Naive thymus-derived CD4-positive, alpha-beta T cell (primary cell): ENCODE measurements at regions of chr7 and their contacts with region 1.

Region 1: DNA sequence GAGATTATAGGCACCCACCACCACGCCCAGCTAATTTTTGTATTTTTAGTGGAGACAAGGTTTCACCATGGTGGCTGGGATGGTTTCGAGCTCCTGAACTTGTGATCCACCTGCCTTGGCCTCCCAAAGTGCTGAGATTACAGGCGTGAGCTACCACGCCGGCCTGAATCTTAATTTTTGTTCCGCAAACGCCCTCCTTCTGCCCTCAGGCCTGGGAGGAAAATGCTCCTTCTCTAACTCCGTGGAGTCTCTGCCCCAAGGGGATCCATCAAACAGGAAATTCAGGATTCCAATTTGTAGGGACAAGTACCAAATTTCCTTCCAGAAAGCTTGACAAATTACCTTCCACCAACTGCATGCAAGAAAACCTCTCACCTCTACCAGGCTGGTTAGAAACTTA is 43.2 kb downstream of the RBAK start:
- DNase-seq: no peak
- ATAC-seq: no peak
- H3K4me3 ChIP-seq: no peak overlapping the region
- H3K4me3 Mint-ChIP-seq: no peak overlapping the region
- H3K27ac ChIP-seq: no peak overlapping the region
- H3K27ac Mint-ChIP-seq: no peak overlapping the region
- H3K4me1 ChIP-seq: no peaks in the 10 kb centered on the region
- H3K4me1 Mint-ChIP-seq: peaks cover 0 to 11% (median 4%) of the 10 kb centered on the region in 7 donors
- H3K27me3 ChIP-seq: no peaks in the 10 kb centered on the region
- H3K27me3 Mint-ChIP-seq: peaks cover 0 to 9% (median 0%) of the 10 kb centered on the region in 5 donors

Region 2: GRCh38 chr7:4797858-4798705 is 290.8 kb before region 1 on chr7:
- CTCF ChIA-PET with region 1: interaction called, 12 read pairs
- POLR2A ChIA-PET with region 1: no interaction called
- intact Hi-C with region 1: loop called (anchors 1 to 2 kb)
- DNase-seq: peak; percentile 34 to 77 (median 60)
- ATAC-seq: peak; percentile 91
- H3K4me3 ChIP-seq: no peak overlapping the region
- H3K4me3 Mint-ChIP-seq: no peak overlapping the region
- H3K27ac ChIP-seq: no peak overlapping the region
- H3K27ac Mint-ChIP-seq: no peak overlapping the region
- H3K4me1 ChIP-seq: no peaks in the 10 kb centered on the region
- H3K4me1 Mint-ChIP-seq: peaks cover 0 to 10% (median 6%) of the 10 kb centered on the region in 7 donors
- H3K27me3 ChIP-seq: no peaks in the 10 kb centered on the region
- H3K27me3 Mint-ChIP-seq: no peaks in the 10 kb centered on the region

Region 3: GRCh38 chr7:4830176-4830575 is 258.7 kb before region 1 on chr7:
- CTCF ChIA-PET with region 1: interaction called, 25 read pairs
- POLR2A ChIA-PET with region 1: no interaction called
- intact Hi-C with region 1: loop called in 1 of 2 experiments (anchors 1 kb)
- DNase-seq: peak; percentile 23 to 69 (median 49)
- ATAC-seq: peak; percentile 79
- H3K4me3 ChIP-seq: no peak overlapping the region
- H3K4me3 Mint-ChIP-seq: no peak overlapping the region
- H3K27ac ChIP-seq: no peak overlapping the region
- H3K27ac Mint-ChIP-seq: peak overlapping the region in 2 of 9 donors; percentile 64 to 87
- H3K4me1 ChIP-seq: no peaks in the 10 kb centered on the region
- H3K4me1 Mint-ChIP-seq: peaks cover 0 to 6% (median 5%) of the 10 kb centered on the region in 7 donors
- H3K27me3 ChIP-seq: no peaks in the 10 kb centered on the region
- H3K27me3 Mint-ChIP-seq: peaks cover 0 to 7% (median 0%) of the 10 kb centered on the region in 5 donors

Region 4: GRCh38 chr7:4849369-4849768 is 239.5 kb before region 1 on chr7:
- CTCF ChIA-PET with region 1: interaction called, 3 read pairs
- POLR2A ChIA-PET with region 1: no interaction called
- intact Hi-C with region 1: loop called (anchors 1 to 5 kb)
- DNase-seq: peak in 4 of 9 donors; percentile 4 to 33 (median 20)
- ATAC-seq: no peak
- H3K4me3 ChIP-seq: no peak overlapping the region
- H3K4me3 Mint-ChIP-seq: no peak overlapping the region
- H3K27ac ChIP-seq: no peak overlapping the region
- H3K27ac Mint-ChIP-seq: no peak overlapping the region
- H3K4me1 ChIP-seq: no peaks in the 10 kb centered on the region
- H3K4me1 Mint-ChIP-seq: peaks cover 0 to 6% (median 1%) of the 10 kb centered on the region in 7 donors
- H3K27me3 ChIP-seq: no peaks in the 10 kb centered on the region
- H3K27me3 Mint-ChIP-seq: peaks cover 9 to 17% (median 16%) of the 10 kb centered on the region in 5 donors

Region 5: GRCh38 chr7:5005066-5005465 is 83.8 kb before region 1 on chr7:
- CTCF ChIA-PET with region 1: no interaction called
- POLR2A ChIA-PET with region 1: no interaction called
- intact Hi-C with region 1: no loop called
- DNase-seq: no peak
- ATAC-seq: no peak
- H3K4me3 ChIP-seq: no peak overlapping the region
- H3K4me3 Mint-ChIP-seq: no peak overlapping the region
- H3K27ac ChIP-seq: no peak overlapping the region
- H3K27ac Mint-ChIP-seq: no peak overlapping the region
- H3K4me1 ChIP-seq: no peaks in the 10 kb centered on the region
- H3K4me1 Mint-ChIP-seq: peaks cover 0 to 6% (median 0%) of the 10 kb centered on the region in 7 donors
- H3K27me3 ChIP-seq: no peaks in the 10 kb centered on the region
- H3K27me3 Mint-ChIP-seq: no peaks in the 10 kb centered on the region